Calu3 (cell line): ENCODE measurements at regions of chr1 and their contacts with region 1.

Region 1: GRCh38 chr1:167687919-167688519 is 33.8 kb upstream of the MPZL1 start:
- DNase-seq: peak; percentile 82
- H3K4me3 Mint-ChIP-seq: no peak overlapping the region
- H3K27ac Mint-ChIP-seq: no peak overlapping the region
- H3K4me1 Mint-ChIP-seq: no peaks in the 10 kb centered on the region
- H3K27me3 Mint-ChIP-seq: peaks cover 90% of the 10 kb centered on the region
- CTCF ChIP-seq: peak; percentile 75

Region 2: DNA sequence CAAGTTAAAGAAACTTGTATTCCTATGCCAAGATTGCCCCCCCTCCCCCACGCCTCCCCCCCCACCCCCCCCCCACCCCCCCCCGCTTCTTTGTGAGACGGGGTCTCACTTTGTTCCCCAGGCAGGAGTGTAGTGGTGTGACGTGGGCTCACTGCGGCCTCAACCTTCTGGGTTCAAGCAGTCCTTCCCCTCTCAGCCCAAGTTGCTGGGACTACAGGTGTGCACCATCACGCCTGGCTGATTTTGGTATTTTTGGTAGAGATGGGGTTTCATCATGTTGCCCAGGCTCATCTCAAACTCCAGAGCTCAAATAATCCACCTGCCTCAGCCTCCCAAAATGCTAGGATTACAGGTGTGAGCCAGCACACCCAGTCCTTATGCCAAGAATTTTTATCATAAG is 330.7 kb before region 1 on chr1:
- CTCF ChIA-PET with region 1: no interaction called
- intact Hi-C with region 1: no loop called
- DNase-seq: no peak
- H3K4me3 Mint-ChIP-seq: no peak overlapping the region
- H3K27ac Mint-ChIP-seq: no peak overlapping the region
- H3K4me1 Mint-ChIP-seq: peaks cover 18% of the 10 kb centered on the region
- H3K27me3 Mint-ChIP-seq: no peaks in the 10 kb centered on the region
- CTCF ChIP-seq: no peak

Region 3: GRCh38 chr1:167553136-167554027 is 134.6 kb before region 1 on chr1 and contains the start of gene CREG1:
- CTCF ChIA-PET with region 1: interaction called, 7 read pairs
- intact Hi-C with region 1: loop called (anchors 1 kb)
- DNase-seq: peak; percentile 99
- H3K4me3 Mint-ChIP-seq: peak within 1 kb of the TSS; percentile 77
- H3K27ac Mint-ChIP-seq: peak within 1 kb of the TSS; percentile 46
- H3K4me1 Mint-ChIP-seq: peaks cover 20% of the 10 kb centered on the region
- H3K27me3 Mint-ChIP-seq: no peaks in the 10 kb centered on the region
- CTCF ChIP-seq: no peak
- total RNA-seq, gene CREG1: 55.0 and 69.3 TPM in 2 replicates

Region 4: GRCh38 chr1:167599957-167600581 is 88.0 kb before region 1 on chr1:
- CTCF ChIA-PET with region 1: interaction called, 5 read pairs
- intact Hi-C with region 1: loop called (anchors 1 kb)
- DNase-seq: no peak
- H3K4me3 Mint-ChIP-seq: no peak overlapping the region
- H3K27ac Mint-ChIP-seq: no peak overlapping the region
- H3K4me1 Mint-ChIP-seq: no peaks in the 10 kb centered on the region
- H3K27me3 Mint-ChIP-seq: peaks cover 44% of the 10 kb centered on the region
- CTCF ChIP-seq: no peak

Region 5: DNA sequence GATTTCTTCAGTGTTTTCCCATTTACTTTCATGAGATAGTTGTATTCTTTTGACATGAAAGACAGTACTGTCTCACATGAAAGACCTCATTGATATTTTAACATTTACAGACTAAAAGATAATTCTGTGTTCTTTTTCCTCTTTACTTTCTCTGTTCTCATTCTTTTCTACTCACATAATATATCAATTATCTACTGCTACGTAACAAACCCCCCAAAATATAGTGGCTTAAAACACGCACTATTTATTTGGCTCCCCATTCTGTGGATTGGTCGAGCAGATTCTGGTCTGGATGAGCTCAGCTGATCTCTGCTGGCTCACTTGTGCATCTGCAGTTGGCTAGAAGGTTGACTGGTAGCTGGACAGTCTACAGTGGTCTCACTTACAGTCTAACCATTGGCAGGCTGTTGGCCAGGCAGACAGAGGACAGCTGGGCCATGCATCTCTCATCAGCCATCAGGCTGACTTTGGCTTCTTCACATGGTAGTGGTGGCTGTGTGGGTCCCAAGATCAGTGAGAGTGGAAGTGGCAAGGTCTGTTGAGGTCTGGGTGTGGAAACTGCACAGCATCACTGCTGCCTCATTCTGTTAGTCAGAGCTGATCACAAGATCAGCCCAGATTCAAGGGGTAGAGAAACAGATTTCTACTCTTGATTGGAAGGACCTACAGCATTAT is 97.0 kb after region 1 on chr1:
- CTCF ChIA-PET with region 1: no interaction called
- intact Hi-C with region 1: no loop called
- DNase-seq: no peak
- H3K4me3 Mint-ChIP-seq: no peak overlapping the region
- H3K27ac Mint-ChIP-seq: no peak overlapping the region
- H3K4me1 Mint-ChIP-seq: no peaks in the 10 kb centered on the region
- H3K27me3 Mint-ChIP-seq: no peaks in the 10 kb centered on the region
- CTCF ChIP-seq: no peak

Region 6: DNA sequence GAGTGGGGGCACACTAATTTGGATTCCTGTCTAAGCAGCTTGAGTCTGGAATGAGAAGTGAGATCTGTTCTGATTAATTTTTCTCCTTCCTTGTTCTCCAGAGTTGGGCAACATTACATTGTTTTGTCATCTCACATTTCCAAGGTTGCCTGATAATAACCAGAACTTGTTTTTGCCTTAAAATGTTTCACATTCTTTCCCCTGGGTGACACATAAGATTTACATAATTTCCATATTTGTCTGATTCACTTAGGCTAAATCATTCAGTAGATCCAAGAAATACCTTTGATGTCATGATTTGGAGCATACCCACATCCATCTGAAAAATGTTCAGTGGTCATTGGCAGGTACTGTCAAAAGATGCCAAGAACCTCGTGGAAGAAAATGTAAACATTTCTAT is 795.5 kb after region 1 on chr1:
- CTCF ChIA-PET with region 1: no interaction called
- intact Hi-C with region 1: no loop called
- DNase-seq: no peak
- H3K4me3 Mint-ChIP-seq: peak overlapping the region; percentile 27
- H3K27ac Mint-ChIP-seq: peak overlapping the region; percentile 77
- H3K4me1 Mint-ChIP-seq: peaks cover 28% of the 10 kb centered on the region
- H3K27me3 Mint-ChIP-seq: no peaks in the 10 kb centered on the region
- CTCF ChIP-seq: no peak